H1 (cell line): ENCODE measurements at regions of chr1 and their contacts with region 1.

Region 1: DNA sequence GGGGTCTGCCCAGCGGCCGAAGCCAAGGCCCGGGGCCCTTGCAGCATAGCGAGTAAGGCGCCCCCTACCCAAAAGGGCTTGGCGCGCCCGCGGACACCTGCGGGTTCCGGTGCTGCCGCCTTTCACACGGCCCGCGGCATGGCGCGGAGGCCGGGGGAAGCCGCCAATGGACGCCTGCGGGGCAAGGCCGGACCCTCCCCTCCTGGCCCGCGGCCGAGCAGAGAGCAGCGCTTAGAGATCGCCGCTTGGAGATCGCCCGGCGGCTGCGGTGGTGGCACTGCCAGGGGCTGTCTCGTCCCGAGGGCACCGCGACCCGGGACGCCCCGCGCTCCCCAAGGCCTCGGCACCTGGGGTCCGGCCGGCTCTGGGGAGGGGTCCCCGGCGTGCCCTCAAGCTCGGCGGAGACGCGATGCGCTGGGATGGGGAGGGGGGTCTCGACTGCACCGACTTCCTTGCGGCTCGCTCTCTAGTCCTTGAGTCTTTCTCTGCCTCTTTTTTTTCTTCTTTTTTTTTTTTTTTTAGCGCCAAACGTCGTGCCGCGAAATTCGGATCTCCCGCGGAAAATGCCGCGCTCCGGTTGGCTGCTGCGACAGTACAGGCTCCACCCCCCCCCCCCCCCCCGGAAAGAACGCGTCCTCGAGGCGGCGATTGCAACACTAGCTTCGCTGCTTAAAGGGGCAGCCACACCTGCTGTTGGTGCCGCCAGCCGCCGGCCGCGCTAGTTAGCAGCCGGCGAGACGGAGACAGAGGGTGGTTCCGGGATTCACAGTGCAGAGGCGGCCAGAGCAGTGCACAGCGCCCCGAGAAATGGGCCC is at the start of gene E2F2:
- DNase-seq: peak; percentile 57 to 80
- H3K4me3 ChIP-seq: peak within 1 kb of the TSS; percentile 51 to 78 (median 56)
- H3K27ac ChIP-seq: peak within 1 kb of the TSS; percentile 48; the same call in 1 of the 2 replicates
- H3K4me1 ChIP-seq: peaks cover 5 to 13% (median 9%) of the 10 kb centered on the region in 4 experiments
- H3K27me3 ChIP-seq: peaks cover 3 to 27% (median 18%) of the 10 kb centered on the region in 4 experiments
- CTCF ChIP-seq: peak; percentile 1 to 37 (median 32); a peak in 3 of 4 replicates
- EP300 ChIP-seq: no peak
- POLR2A ChIP-seq: peak in 1 of 2 experiments; percentile 75; a peak in 2 of 3 replicates
- RAD21 ChIP-seq: peak; percentile 25 to 29; a peak in 1 of 4 replicates
- total RNA-seq, gene E2F2: 6.1 and 7.0 TPM in 2 replicates

Region 2: DNA sequence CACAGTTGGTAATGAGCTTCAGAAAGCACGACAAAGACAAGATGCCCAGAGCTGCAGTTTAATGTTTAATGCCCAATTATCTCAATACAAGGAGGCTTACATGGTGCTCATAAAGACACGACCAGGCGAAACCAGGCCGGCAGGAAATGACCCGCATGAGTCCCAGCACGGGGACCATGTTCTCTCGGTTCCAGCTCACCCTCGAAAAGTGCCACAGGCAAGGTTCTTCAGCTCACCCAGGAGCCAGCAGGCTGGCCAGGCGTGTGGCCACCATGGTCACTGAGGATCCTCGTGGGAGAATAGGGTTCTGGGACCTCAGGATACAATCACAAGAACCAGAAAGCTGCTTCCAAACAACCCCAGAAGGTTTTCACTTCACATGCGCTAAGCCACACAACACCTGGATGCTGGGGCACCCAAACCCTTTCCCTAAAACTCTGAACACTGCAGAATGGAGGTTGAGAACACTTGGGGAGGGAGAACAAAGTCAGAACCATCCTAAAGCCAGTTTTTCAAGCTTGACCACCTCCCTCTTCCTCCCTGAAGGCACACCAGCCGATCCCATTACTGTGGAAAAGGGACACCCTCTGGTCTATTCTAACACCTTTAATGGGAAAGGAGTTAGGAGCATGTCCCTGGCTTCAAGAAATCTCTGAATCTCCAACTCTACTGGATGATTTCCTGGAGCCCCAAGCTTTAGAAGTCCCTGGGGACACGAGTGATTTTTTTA is 24.4 kb before region 1 on chr1:
- CTCF ChIA-PET with region 1: interaction called, 230 read pairs
- POLR2A ChIA-PET with region 1: interaction called, 6 read pairs
- DNase-seq: no peak
- H3K4me3 ChIP-seq: no peak overlapping the region
- H3K27ac ChIP-seq: no peak overlapping the region
- H3K4me1 ChIP-seq: no peaks in the 10 kb centered on the region
- H3K27me3 ChIP-seq: no peaks in the 10 kb centered on the region
- CTCF ChIP-seq: no peak
- EP300 ChIP-seq: no peak
- POLR2A ChIP-seq: no peak
- RAD21 ChIP-seq: no peak

Region 3: GRCh38 chr1:23514111-23514679 is 16.8 kb before region 1 on chr1:
- CTCF ChIA-PET with region 1: interaction called, 62 read pairs
- POLR2A ChIA-PET with region 1: interaction called, 5 read pairs
- DNase-seq: no peak
- H3K4me3 ChIP-seq: no peak overlapping the region
- H3K27ac ChIP-seq: no peak overlapping the region
- H3K4me1 ChIP-seq: no peaks in the 10 kb centered on the region
- H3K27me3 ChIP-seq: no peaks in the 10 kb centered on the region
- CTCF ChIP-seq: no peak
- EP300 ChIP-seq: no peak
- POLR2A ChIP-seq: no peak
- RAD21 ChIP-seq: no peak